Mammary epithelial cell (primary cell): ENCODE measurements at regions of chr17 and their contacts with region 1.

Region 1: GRCh38 chr17:29640413-29640812 is 17.7 kb upstream of the CORO6 start:
- DNase-seq: no peak
- H3K4me3 ChIP-seq: no peak overlapping the region
- H3K27ac ChIP-seq: peak overlapping the region; percentile 53
- H3K4me1 ChIP-seq: peaks cover 20% of the 10 kb centered on the region
- H3K27me3 ChIP-seq: no peaks in the 10 kb centered on the region
- CTCF ChIP-seq: no peak

Region 2: GRCh38 chr17:29059281-29059680 is 581.1 kb before region 1 on chr17:
- CTCF ChIA-PET with region 1: no interaction called
- dilution Hi-C with region 1: no loop called
- in situ Hi-C with region 1: no loop called
- intact Hi-C with region 1: no loop called
- DNase-seq: peak; percentile 51
- H3K4me3 ChIP-seq: no peak overlapping the region
- H3K27ac ChIP-seq: no peak overlapping the region
- H3K4me1 ChIP-seq: no peaks in the 10 kb centered on the region
- H3K27me3 ChIP-seq: no peaks in the 10 kb centered on the region
- CTCF ChIP-seq: no peak

Region 3: GRCh38 chr17:29579866-29580771 is 60.3 kb before region 1 on chr17:
- CTCF ChIA-PET with region 1: interaction called, 3 read pairs
- dilution Hi-C with region 1: loop called (anchors 5 kb)
- in situ Hi-C with region 1: no loop called
- intact Hi-C with region 1: loop called (anchors 1 kb)
- DNase-seq: peak; percentile 73
- H3K4me3 ChIP-seq: no peak overlapping the region
- H3K27ac ChIP-seq: no peak overlapping the region
- H3K4me1 ChIP-seq: peaks cover 50% of the 10 kb centered on the region
- H3K27me3 ChIP-seq: no peaks in the 10 kb centered on the region
- CTCF ChIP-seq: peak; percentile 80 to 97

Region 4: DNA sequence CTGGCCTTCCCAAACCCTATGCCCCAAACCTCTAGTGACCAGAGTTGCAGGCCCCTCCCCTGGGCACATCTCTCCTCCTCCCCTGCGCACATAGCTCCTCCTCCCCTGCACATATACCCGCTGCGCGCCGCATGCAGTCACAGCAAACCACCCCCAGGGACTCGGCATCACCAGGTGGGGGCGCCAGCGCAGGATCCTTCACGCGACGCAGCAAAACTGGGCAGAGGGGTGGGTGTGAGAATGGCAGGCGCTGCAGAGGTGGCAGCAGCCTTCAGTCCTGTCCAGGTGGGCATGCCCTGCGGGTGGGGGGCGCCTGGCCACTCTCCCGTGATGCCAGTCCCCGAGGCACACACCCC is 23.3 kb before region 1 on chr17:
- CTCF ChIA-PET with region 1: interaction called, 10 read pairs
- dilution Hi-C with region 1: no loop called
- in situ Hi-C with region 1: no loop called
- intact Hi-C with region 1: loop called (anchors 1 kb)
- DNase-seq: no peak
- H3K4me3 ChIP-seq: no peak overlapping the region
- H3K27ac ChIP-seq: no peak overlapping the region
- H3K4me1 ChIP-seq: peaks cover 51% of the 10 kb centered on the region
- H3K27me3 ChIP-seq: no peaks in the 10 kb centered on the region
- CTCF ChIP-seq: peak; percentile 31 to 45

Region 5: GRCh38 chr17:29682054-29682453 is 41.6 kb after region 1 on chr17:
- CTCF ChIA-PET with region 1: no interaction called
- dilution Hi-C with region 1: no loop called
- in situ Hi-C with region 1: no loop called
- intact Hi-C with region 1: no loop called
- DNase-seq: no peak
- H3K4me3 ChIP-seq: no peak overlapping the region
- H3K27ac ChIP-seq: no peak overlapping the region
- H3K4me1 ChIP-seq: no peaks in the 10 kb centered on the region
- H3K27me3 ChIP-seq: no peaks in the 10 kb centered on the region
- CTCF ChIP-seq: no peak

Region 6: GRCh38 chr17:29710891-29711418 is 70.5 kb after region 1 on chr17:
- CTCF ChIA-PET with region 1: no interaction called
- dilution Hi-C with region 1: no loop called
- in situ Hi-C with region 1: no loop called
- intact Hi-C with region 1: no loop called
- DNase-seq: peak; percentile 95
- H3K4me3 ChIP-seq: no peak overlapping the region
- H3K27ac ChIP-seq: peak overlapping the region; percentile 38
- H3K4me1 ChIP-seq: peaks cover 27% of the 10 kb centered on the region
- H3K27me3 ChIP-seq: no peaks in the 10 kb centered on the region
- CTCF ChIP-seq: no peak

Region 7: GRCh38 chr17:29777663-29778062 is 137.2 kb after region 1 on chr17:
- CTCF ChIA-PET with region 1: interaction called, 32 read pairs
- dilution Hi-C with region 1: no loop called
- in situ Hi-C with region 1: loop called (anchors 10 kb)
- intact Hi-C with region 1: loop called (anchors 1 kb)
- DNase-seq: no peak
- H3K4me3 ChIP-seq: no peak overlapping the region
- H3K27ac ChIP-seq: no peak overlapping the region
- H3K4me1 ChIP-seq: no peaks in the 10 kb centered on the region
- H3K27me3 ChIP-seq: no peaks in the 10 kb centered on the region
- CTCF ChIP-seq: no peak

Region 8: DNA sequence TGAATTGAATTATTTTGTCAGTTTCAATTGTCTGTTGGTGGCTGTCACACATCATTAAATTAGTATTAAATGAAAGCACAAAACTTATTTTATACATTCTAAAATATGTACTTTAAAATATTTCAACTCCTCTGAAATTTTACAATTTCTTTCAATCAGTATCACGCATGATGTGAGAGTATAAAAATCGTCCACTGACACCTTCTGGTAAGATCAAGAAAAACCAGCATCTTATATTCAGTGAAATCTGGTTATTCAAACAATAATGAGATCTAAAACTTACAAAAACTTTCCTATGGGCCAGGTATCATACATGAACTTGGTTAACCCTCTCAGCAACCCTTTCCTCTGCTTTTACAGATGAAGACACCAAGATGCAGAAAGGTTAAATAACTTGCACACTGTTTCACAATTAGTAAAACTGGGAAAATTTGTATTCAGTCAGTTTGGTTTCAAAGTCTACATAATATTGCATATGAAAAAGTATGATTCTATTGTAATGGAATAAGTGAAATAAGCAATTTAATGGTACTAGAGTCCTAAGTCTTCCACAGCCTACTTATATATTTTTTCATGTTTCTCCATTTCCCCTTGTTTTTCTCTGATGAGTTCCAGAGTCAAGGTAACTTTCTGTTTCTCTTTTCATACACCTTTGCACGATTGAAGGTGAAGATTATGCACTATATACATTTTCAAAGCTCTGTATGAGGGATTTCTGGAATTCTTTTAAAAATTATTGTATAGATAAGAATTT is 359.8 kb after region 1 on chr17:
- CTCF ChIA-PET with region 1: no interaction called
- dilution Hi-C with region 1: no loop called
- in situ Hi-C with region 1: no loop called
- intact Hi-C with region 1: loop called (anchors 5 kb)
- DNase-seq: no peak
- H3K4me3 ChIP-seq: no peak overlapping the region
- H3K27ac ChIP-seq: no peak overlapping the region
- H3K4me1 ChIP-seq: peaks cover 12% of the 10 kb centered on the region
- H3K27me3 ChIP-seq: no peaks in the 10 kb centered on the region
- CTCF ChIP-seq: peak in 1 of 2 donors; percentile 15

Region 9: GRCh38 chr17:30093463-30094147 is 453.2 kb after region 1 on chr17:
- CTCF ChIA-PET with region 1: no interaction called
- dilution Hi-C with region 1: no loop called
- in situ Hi-C with region 1: no loop called
- intact Hi-C with region 1: loop called (anchors 1 kb)
- DNase-seq: peak; percentile 43
- H3K4me3 ChIP-seq: no peak overlapping the region
- H3K27ac ChIP-seq: no peak overlapping the region
- H3K4me1 ChIP-seq: no peaks in the 10 kb centered on the region
- H3K27me3 ChIP-seq: no peaks in the 10 kb centered on the region
- CTCF ChIP-seq: peak; percentile 62 to 70

Region 10: GRCh38 chr17:30395398-30396022 is 755.1 kb after region 1 on chr17:
- CTCF ChIA-PET with region 1: no interaction called
- dilution Hi-C with region 1: no loop called
- in situ Hi-C with region 1: no loop called
- intact Hi-C with region 1: no loop called
- DNase-seq: no peak
- H3K4me3 ChIP-seq: no peak overlapping the region
- H3K27ac ChIP-seq: no peak overlapping the region
- H3K4me1 ChIP-seq: no peaks in the 10 kb centered on the region
- H3K27me3 ChIP-seq: no peaks in the 10 kb centered on the region
- CTCF ChIP-seq: no peak